HAP-1 (cell line): ENCODE measurements at regions of chr12 and their contacts with region 1.

Region 1: DNA sequence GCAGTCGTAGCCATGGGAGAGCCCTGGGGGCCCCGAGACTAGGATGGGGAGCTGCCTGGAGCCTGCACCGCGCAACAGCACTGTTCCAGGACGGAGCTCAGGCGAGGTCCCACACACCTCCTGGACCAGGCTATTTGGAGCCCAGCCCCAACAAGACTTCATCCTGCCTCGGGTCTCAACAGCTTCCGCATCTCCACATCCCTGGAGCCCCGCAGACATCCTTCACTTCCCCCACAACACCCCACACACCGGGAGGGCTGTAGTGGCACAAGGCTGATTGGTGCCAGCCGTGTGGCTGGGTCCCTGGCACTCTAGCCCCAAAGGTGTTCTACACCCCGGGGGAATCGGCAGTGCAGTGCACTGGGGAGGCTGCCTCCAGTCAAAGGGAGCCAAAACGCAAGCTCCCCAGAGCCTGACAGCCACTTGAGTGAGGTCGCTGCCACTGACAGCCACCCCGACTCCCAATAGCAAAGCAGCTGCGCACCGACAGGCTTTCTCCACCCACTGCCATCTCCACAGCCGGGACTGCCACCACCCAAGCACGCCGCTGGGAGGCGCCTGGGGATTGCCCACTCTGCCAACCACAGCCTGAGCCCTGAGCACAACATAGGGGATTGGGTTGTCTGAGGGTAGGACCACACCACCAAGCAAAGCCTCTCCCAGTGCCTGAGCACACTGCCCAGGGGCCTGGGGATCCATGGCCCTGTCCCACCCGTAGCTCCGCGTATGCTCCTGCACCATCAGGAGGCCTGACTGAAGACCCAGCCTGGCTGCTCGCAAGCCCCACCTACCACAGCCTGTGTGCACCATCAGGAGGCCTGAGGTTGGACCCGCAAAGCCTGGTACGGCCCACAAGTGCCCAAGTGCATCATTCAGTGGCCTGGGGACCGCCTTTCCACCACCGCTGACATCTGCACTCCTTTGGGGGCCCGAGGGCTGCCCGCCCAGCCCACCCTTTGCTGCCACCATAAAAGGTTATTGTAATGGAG is 13.2 kb upstream of the KLRF1 start:
- DNase-seq: peak; percentile 49 to 91
- H3K4me3 ChIP-seq: peak overlapping the region; percentile 18
- H3K4me1 ChIP-seq: peaks cover 5% of the 10 kb centered on the region
- H3K27me3 ChIP-seq: no peaks in the 10 kb centered on the region

Region 2: GRCh38 chr12:9651265-9651729 is 162.8 kb before region 1 on chr12:
- in situ Hi-C with region 1: no loop called
- DNase-seq: no peak
- H3K4me3 ChIP-seq: no peak overlapping the region
- H3K4me1 ChIP-seq: peaks cover 15% of the 10 kb centered on the region
- H3K27me3 ChIP-seq: no peaks in the 10 kb centered on the region

Region 3: DNA sequence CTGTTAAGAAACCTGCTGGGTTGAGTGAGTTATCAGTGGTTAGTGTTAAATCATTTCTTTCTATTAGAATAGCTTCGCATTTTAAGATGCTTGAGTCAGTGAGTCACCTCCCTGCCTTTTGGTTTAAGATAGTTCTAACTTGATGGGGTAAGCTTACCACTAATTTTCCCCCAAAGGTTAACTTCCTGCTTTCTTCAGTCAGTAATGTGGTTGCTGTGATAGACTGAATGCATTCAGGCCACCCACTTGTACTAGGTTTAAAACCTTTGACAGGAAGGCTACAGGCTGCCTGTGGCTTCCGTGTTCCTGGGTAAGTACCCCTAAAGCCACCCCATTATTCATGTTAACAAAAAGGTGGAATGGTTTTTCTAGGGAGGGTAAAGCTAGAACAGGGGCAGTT is 92.8 kb after region 1 on chr12:
- in situ Hi-C with region 1: loop called (anchors 5 kb)
- DNase-seq: no peak
- H3K4me3 ChIP-seq: no peak overlapping the region
- H3K4me1 ChIP-seq: no peaks in the 10 kb centered on the region
- H3K27me3 ChIP-seq: no peaks in the 10 kb centered on the region